ENCODE measurements at regions of chrX and their contacts with region 1.

Region 1: DNA sequence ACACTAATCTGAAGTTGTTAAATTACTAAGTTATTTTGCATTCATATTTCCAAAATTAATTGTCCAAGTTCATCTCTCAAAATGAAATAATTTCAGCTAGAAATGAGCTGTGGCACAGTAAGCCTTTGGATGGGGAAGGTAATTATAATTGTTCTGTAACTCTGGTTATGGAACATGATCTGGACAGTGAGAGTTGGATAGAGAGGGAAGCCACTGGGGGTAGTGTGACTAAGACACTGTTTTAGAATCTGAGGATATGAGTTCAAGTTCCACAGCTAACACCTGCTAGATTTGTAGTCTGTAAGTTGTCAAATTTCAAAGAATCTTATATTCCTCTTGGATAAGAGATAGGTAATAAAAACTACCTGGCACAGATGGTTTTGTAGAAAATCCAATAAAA is 49.5 kb downstream of the DMD start:
- DNase-seq: no peak
- ATAC-seq: peak; percentile 65 to 75 (median 72)
- H3K4me3 ChIP-seq: no peak overlapping the region
- H3K27ac ChIP-seq: peak overlapping the region; percentile 54
- H3K4me1 ChIP-seq: peaks cover 4% of the 10 kb centered on the region
- H3K27me3 ChIP-seq: no peaks in the 10 kb centered on the region
- CTCF ChIP-seq: no peak

Region 2: DNA sequence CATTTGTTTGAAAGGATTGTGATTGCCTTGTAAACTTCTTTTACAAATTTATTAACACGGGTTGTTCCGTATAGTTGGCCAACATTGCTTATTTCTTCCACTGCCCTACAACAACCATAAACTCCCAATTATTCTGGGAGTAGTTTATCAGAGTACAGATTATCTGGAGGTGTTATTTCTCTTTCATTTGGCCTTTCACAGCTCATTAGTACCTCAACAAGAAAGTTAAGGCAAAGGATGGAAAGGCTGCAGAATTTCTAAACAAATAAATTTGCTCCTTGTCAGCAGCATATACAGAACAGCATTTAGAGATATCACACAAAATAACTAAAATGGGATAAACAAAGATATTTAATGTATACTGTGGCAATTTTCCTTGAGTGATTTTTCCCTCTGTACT is 499.3 kb before region 1 on chrX:
- intact Hi-C with region 1: no loop called
- DNase-seq: no peak
- ATAC-seq: no peak
- H3K4me3 ChIP-seq: no peak overlapping the region
- H3K27ac ChIP-seq: no peak overlapping the region
- H3K4me1 ChIP-seq: no peaks in the 10 kb centered on the region
- H3K27me3 ChIP-seq: no peaks in the 10 kb centered on the region
- CTCF ChIP-seq: no peak

Region 3: GRCh38 chrX:33142331-33142730 is 19.5 kb before region 1 on chrX:
- intact Hi-C with region 1: loop called in 1 of 2 experiments (anchors 1 kb)
- DNase-seq: no peak
- ATAC-seq: no peak
- H3K4me3 ChIP-seq: no peak overlapping the region
- H3K27ac ChIP-seq: no peak overlapping the region
- H3K4me1 ChIP-seq: peaks cover 5% of the 10 kb centered on the region
- H3K27me3 ChIP-seq: no peaks in the 10 kb centered on the region
- CTCF ChIP-seq: no peak